GM12878 (cell line): ENCODE measurements at regions of chr17 and their contacts with region 1.

Region 1: DNA sequence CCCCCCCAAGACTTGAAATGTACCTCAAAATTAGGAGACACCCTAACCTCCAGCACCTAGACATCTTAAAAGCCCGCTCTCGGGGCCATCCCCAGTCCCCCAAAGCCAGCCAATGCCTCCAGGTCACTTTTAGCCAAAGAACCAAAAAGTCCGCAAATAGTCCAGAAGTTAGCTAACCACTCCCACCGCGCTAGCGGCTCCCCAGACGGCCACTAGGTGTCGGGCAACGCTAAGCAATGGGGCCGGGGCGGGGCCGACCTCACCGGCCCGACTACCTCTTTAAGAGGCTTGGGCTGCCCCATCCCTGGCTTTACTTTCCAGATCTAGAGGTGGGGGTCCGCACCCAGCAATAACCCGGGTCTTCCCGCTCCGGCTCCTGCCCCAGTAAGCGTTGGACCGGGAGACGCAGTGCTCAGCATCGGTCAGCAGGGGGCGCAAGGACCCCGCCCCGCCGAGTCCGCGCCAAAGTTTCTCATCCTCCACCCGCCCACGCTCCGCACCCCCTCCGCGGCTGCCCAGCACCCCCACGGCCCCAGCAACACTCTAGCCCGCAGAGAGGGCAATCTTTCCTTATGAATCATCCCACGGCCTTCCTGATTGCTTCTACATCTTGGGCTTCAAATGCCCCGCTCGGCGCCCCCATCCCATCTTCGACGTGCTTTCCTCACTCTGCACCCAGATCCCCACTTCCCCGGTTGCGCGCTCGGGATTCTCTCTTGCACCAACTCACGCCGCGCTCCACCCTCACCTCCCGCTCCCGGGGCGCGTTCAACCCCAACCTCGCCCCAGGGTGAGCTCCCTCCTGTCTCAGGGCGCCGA is 765 bp downstream of the COL1A1 start:
- DNase-seq: no peak
- ATAC-seq: peak; percentile 88
- H3K4me3 ChIP-seq: peak overlapping the region; percentile 70
- H3K27ac ChIP-seq: no peak overlapping the region
- H3K4me1 ChIP-seq: peaks cover 9% of the 10 kb centered on the region
- H3K27me3 ChIP-seq: peaks cover 9 to 13% of the 10 kb centered on the region in 2 experiments
- CTCF ChIP-seq: peak; percentile 70 to 99 (median 92)
- EP300 ChIP-seq: no peak
- POLR2A ChIP-seq: no peak
- RAD21 ChIP-seq: peak; percentile 92

Region 2: DNA sequence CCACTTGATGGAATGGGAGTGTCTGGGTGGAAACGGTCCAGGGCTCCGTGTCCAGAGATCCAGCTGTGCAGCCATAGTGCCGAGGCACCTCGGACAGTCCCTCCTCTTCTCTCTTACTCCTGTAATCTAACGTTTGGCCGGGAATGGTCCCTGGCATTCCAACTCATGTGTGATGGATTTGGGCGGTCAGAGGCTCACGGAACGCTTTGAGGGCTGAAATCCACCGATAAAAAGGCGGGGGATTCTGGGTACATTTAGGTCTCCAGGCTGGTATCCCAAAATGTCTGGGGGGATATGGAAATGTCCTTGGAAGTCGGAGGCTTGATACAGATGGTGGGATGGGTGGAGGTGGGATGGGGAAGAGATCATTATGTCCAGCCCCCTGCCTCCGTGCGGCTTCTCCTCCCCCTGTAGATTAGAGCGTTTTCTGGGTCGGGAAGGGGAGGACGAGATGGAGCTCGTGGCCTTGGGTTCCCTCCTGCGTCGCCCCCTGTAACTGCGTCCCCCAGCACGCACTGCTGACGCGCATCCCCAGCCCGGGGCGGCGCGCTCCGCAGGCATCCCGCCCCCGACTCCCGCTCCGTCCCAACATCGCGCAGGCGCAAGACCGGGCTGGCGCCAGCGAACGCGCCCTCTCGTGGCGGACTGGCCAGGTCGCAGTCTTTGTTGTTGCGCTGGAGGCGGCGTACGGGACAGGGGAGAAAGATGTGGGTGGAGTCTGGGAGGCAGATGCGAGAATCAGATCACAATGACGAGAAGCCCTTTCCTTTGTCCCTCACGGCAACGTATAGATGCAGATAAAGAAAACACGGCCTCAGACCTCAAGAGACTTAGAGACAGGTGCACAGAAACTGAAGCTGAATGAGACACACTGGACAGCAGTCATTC is 39.4 kb before region 1 on chr17:
- CTCF ChIA-PET with region 1: interaction called, 514 read pairs
- POLR2A ChIA-PET with region 1: interaction called, 4 read pairs
- RAD21 ChIA-PET with region 1: interaction called, 24 read pairs
- SMC1A ChIA-PET with region 1: interaction called, 22 read pairs
- in situ Hi-C with region 1: loop called (anchors 5 kb)
- intact Hi-C with region 1: no loop called
- DNase-seq: peak; percentile 80
- ATAC-seq: peak; percentile 96
- H3K4me3 ChIP-seq: peak overlapping the region; percentile 53
- H3K27ac ChIP-seq: peak overlapping the region; percentile 32; the same call in 1 of the 2 replicates
- H3K4me1 ChIP-seq: peaks cover 26% of the 10 kb centered on the region
- H3K27me3 ChIP-seq: no peaks in the 10 kb centered on the region
- CTCF ChIP-seq: peak; percentile 93 to 98 (median 97)
- EP300 ChIP-seq: no peak
- POLR2A ChIP-seq: peak; percentile 83
- RAD21 ChIP-seq: peak; percentile 71

Region 3: DNA sequence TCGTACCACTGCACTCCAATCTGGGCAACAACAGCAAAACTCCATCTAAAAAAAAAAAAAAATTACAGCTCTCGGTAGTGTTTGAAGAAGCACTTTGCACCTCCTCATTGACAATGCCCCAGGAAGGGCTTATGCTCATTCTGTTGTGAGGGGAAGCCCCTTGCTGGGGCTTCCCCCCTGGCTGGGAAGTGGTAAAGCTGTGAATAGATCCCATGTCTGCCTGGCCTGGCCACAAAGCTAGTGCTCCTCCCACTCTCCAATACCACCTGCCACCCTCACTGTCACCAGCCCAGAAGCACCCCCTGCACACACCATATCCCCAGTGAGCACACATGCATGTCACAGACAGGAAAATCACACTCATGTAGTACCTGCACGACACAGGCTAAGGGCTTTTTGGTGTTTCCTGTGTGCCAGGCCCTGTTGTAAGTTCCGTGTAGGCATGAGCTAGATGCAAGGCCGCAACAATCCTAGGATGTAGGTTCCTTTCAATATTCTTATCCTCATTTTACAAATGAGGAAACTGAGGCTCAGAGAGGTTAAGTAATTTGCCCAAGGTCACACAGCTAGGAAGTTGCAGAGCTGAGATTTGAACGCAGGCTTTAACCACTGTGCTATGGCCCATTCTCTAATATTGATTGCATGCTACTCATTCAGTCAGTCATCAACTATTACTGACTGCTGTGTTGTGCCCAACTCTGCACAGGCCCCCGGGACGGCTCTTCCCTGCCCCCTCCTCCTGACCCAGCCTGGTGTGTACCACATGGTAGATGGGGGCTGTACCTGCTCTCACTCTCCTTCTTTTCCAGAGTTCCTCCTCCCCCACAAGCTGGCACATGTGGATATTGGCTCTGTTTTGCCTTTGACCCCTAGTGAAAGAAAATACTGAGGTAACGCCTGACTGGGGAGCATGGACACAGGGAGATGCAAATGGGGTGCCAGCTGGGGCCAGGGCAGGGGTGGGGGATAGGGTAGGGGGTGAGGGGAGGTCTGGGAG is 12.7 kb after region 1 on chr17:
- CTCF ChIA-PET with region 1: interaction called, 68 read pairs
- POLR2A ChIA-PET with region 1: interaction called, 14 read pairs
- RAD21 ChIA-PET with region 1: interaction called, 18 read pairs
- SMC1A ChIA-PET with region 1: interaction called, 21 read pairs
- in situ Hi-C with region 1: no loop called
- intact Hi-C with region 1: no loop called
- DNase-seq: peak; percentile 43
- ATAC-seq: peak; percentile 98
- H3K4me3 ChIP-seq: no peak overlapping the region
- H3K27ac ChIP-seq: no peak overlapping the region
- H3K4me1 ChIP-seq: peaks cover 12% of the 10 kb centered on the region
- H3K27me3 ChIP-seq: 0 out of 4 replicates have a peak, but pooled peaks cover 0 to 3% of the 10 kb centered on the region in 2 experiments
- CTCF ChIP-seq: peak in 2 of 3 experiments; percentile 14 to 20; a peak in 1 of 6 replicates
- EP300 ChIP-seq: peak in 1 of 2 experiments; percentile 53; a peak in 1 of 4 replicates
- POLR2A ChIP-seq: no peak
- RAD21 ChIP-seq: no peak

Region 4: GRCh38 chr17:50279181-50279526 is 78.5 kb after region 1 on chr17:
- CTCF ChIA-PET with region 1: interaction called, 208 read pairs
- POLR2A ChIA-PET with region 1: interaction called, 7 read pairs
- RAD21 ChIA-PET with region 1: interaction called, 84 read pairs
- SMC1A ChIA-PET with region 1: interaction called, 71 read pairs
- in situ Hi-C with region 1: loop called (anchors 5 kb)
- intact Hi-C with region 1: no loop called
- DNase-seq: no peak
- ATAC-seq: no peak
- H3K4me3 ChIP-seq: no peak overlapping the region
- H3K27ac ChIP-seq: no peak overlapping the region
- H3K4me1 ChIP-seq: peaks cover 32% of the 10 kb centered on the region
- H3K27me3 ChIP-seq: peaks cover 0 to 1% of the 10 kb centered on the region in 2 experiments; a peak in 3 of 4 replicates
- CTCF ChIP-seq: no peak
- EP300 ChIP-seq: no peak
- POLR2A ChIP-seq: no peak
- RAD21 ChIP-seq: no peak

Region 5: GRCh38 chr17:50312308-50312707 is 111.6 kb after region 1 on chr17:
- CTCF ChIA-PET with region 1: interaction called, 6 read pairs
- POLR2A ChIA-PET with region 1: no interaction called
- RAD21 ChIA-PET with region 1: interaction called, 11 read pairs
- SMC1A ChIA-PET with region 1: interaction called, 6 read pairs
- in situ Hi-C with region 1: no loop called
- intact Hi-C with region 1: no loop called
- DNase-seq: no peak
- ATAC-seq: no peak
- H3K4me3 ChIP-seq: no peak overlapping the region
- H3K27ac ChIP-seq: no peak overlapping the region
- H3K4me1 ChIP-seq: peaks cover 17% of the 10 kb centered on the region
- H3K27me3 ChIP-seq: no peaks in the 10 kb centered on the region
- CTCF ChIP-seq: no peak
- EP300 ChIP-seq: no peak
- POLR2A ChIP-seq: no peak
- RAD21 ChIP-seq: no peak

Region 6: DNA sequence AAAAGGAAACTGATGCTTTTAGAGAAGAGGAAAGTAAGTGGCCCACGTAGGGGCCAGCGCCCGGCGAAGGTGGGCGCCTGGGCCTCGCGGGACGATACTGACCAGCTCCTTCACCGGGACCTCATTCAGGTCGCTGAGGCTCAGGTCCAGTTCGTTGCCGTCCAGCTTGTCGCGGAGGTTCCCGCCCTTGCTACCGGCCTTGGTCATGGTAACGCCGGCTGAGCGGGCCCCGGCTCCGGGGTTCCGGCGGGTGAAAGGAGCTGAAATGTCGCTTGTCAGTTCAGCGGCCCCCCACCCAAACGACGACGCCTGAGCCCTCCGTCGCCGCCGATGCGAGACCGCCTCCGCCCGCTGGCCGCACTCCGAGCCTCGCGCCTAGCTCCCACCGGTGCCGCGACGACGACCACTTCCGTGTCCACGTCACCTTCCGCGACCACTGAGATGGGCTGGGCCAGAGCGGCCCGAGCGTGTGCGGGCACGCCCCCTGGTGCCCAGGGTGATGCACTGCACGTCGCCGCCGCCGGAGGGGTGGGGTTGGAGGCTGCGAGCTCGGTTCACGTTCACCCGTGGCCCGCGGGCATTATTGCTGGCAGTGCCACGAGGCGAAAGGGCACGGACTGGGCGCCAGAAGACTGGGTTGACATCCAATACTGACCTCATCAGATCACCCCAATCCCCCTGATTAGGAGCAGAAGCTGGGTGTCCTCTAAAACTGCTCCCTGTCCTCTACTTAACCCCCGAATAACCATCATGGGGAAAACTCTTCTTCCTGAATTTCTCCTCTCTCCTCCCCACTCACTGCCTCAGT is 196.6 kb after region 1 on chr17 and contains the start of gene LRRC59:
- CTCF ChIA-PET with region 1: interaction called, 15 read pairs
- POLR2A ChIA-PET with region 1: no interaction called
- RAD21 ChIA-PET with region 1: interaction called, 6 read pairs
- SMC1A ChIA-PET with region 1: no interaction called
- in situ Hi-C with region 1: no loop called
- intact Hi-C with region 1: no loop called
- DNase-seq: peak; percentile 55
- ATAC-seq: peak; percentile 97
- H3K4me3 ChIP-seq: peak within 1 kb of the TSS; percentile 93
- H3K27ac ChIP-seq: peak within 1 kb of the TSS; percentile 81
- H3K4me1 ChIP-seq: peaks cover 5% of the 10 kb centered on the region
- H3K27me3 ChIP-seq: no peaks in the 10 kb centered on the region
- CTCF ChIP-seq: peak; percentile 99; a peak in 5 of 6 replicates
- EP300 ChIP-seq: 0 out of 4 replicates have a peak, but pooled peaks of 1 of the 2 experiments have one; percentile 42
- POLR2A ChIP-seq: peak; percentile 100
- RAD21 ChIP-seq: peak; percentile 43
- polyA plus RNA-seq, gene LRRC59: 8.8 to 17.9 TPM